Calu3 (cell line): ENCODE measurements at regions of chr5 and their contacts with region 1.

Region 1: DNA sequence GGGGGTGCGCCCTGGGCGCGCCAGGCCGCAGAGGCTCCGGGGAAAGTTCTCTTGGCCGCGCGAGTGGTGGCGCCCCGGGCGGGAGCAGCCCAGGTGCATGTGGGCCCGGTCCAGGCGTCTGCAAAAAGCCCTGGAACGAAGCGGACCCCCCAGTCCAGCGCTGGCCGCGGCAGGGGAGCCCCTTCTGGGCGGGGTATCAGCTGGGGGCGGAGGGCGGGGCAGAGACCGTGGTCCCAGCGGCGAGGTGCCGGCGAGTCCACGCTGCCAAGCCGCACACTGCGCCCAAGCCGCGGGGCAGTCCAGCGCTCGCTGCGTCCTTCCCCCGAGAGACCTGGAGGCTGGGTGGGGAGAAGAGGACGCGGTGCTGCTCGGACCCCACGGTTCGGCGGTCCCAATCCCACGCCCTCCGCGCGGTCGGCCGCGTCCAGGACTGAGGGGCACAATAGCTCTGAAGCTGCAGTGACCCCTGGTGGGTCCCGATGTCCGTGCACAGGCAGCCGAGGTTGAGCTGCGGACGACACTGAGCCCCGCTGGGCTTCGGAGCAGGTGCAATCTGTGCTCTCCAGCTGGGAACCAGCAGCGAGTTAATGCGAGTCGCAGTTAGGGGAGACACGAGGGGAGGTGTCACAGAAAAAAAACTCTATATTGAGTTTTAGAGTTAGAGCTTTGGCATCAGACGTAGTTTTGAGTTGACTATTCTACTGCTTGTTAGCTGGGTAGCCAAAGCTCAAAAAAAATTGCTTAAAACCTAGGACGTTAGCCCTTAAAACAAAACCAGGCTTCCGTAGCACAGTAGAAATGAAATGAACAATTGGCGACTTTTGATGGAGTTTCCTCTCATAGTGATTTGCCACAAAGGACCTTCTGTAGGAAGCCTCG is 1.1 kb upstream of the EPB41L4A start:
- DNase-seq: peak; percentile 94
- H3K4me3 Mint-ChIP-seq: peak overlapping the region; percentile 93
- H3K27ac Mint-ChIP-seq: peak overlapping the region; percentile 40
- H3K4me1 Mint-ChIP-seq: no peaks in the 10 kb centered on the region
- H3K27me3 Mint-ChIP-seq: no peaks in the 10 kb centered on the region
- CTCF ChIP-seq: peak; percentile 96

Region 2: DNA sequence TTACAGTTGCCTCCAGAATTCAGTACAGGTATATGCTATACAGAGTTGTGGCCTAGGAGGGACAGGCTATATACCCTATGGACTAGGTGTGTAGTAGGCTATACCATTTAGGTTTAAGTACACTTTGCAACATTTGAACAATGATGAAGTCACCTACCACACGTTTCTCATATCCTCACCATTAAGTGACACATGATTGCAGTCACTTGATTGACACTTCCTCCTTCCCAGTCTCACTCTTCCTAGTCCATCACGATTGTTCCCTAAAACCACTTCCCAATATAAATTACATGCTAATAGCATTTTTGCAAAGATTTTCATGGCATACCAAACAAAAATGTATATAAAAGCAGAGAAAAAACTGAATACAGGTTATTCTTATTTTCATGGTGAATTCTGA is 313.3 kb before region 1 on chr5:
- CTCF ChIA-PET with region 1: no interaction called
- intact Hi-C with region 1: no loop called
- DNase-seq: no peak
- H3K4me3 Mint-ChIP-seq: no peak overlapping the region
- H3K27ac Mint-ChIP-seq: no peak overlapping the region
- H3K4me1 Mint-ChIP-seq: peaks cover 10% of the 10 kb centered on the region
- H3K27me3 Mint-ChIP-seq: no peaks in the 10 kb centered on the region
- CTCF ChIP-seq: no peak

Region 3: DNA sequence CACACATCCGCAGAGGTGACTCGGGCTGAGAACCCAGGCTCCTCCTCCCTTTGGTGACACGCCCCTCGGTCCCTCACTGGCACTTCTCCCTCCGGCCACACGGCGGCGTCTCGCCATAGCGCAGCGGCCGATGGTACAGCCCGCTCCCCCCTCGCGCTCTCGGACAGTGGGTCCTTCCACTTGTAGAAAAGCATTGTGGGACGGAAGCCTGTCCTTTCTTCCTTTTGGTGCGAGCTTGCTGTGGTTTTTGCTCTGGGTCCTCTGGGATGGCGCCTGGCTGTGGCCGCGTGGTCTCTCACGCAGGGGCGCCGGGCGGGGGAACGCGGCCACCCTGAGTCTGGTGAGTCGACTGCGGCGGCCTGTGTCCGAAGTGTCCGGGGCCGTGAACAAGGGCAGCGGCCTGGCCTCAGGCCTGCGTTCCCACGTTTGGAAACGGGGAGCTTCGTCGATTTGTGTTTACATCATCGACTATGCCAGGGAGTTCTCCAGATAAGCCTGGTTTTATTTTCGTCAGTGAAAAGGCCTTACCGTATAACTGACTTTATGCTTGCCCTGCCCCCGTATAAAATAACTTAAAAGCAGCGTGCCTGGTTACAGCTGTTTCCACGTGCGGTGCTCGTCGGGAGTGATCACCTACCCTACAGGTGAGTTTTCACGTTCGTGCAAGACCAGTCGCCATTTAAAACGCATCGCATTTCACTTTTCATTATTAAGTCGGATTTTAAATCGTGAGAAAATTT is 259.4 kb before region 1 on chr5:
- CTCF ChIA-PET with region 1: interaction called, 11 read pairs
- intact Hi-C with region 1: no loop called
- DNase-seq: peak; percentile 97
- H3K4me3 Mint-ChIP-seq: peak overlapping the region; percentile 91
- H3K27ac Mint-ChIP-seq: peak overlapping the region; percentile 67
- H3K4me1 Mint-ChIP-seq: peaks cover 38% of the 10 kb centered on the region
- H3K27me3 Mint-ChIP-seq: no peaks in the 10 kb centered on the region
- CTCF ChIP-seq: peak; percentile 93

Region 4: DNA sequence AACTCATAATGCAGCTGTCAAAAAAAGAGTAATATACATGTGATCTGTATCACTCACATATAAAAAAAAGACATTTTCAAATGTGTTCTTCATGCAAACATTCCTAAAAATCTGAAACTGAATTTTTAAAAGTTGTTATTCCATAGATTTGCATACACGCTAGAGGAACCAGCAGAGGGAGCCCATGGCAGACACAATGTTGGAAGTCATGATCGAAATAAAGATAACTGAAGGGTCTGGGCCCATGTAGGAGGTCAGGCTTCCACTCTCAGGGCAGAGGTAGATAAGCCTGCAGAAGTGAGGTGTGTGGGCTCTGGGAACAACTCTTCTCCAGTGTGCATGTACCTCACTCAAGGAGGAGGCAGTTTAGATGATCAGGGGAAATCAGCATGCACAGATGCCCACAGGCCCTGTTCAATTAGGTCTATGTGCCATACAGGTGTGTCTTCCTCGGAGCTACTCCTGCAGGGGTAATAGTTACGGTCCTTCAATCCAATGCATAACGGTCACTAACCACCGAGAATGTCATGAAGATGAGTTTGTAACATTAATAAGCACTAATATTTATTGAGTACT is 209.7 kb before region 1 on chr5:
- CTCF ChIA-PET with region 1: interaction called, 22 read pairs
- intact Hi-C with region 1: loop called (anchors 1 kb)
- DNase-seq: peak; percentile 66
- H3K4me3 Mint-ChIP-seq: no peak overlapping the region
- H3K27ac Mint-ChIP-seq: no peak overlapping the region
- H3K4me1 Mint-ChIP-seq: peaks cover 17% of the 10 kb centered on the region
- H3K27me3 Mint-ChIP-seq: no peaks in the 10 kb centered on the region
- CTCF ChIP-seq: peak; percentile 55

Region 5: DNA sequence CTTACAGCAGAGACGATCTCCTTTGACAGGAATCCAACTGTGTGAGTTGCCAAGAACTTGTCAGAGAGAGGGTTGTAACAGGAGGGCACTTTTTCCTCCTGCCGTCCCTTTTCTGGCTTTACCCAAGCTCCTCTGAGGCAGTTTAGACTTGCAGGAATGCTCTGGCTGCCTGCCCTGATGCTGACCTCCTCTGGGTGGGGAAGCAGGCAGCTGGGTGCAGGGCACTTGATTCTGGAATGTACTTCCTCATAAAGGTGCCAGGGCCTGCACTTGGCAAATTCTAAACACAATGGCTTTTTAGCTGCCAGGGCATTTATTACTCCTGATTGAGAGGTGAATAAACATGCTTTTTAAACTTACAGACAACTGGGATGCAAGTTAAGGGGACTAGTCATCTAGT is 191.6 kb before region 1 on chr5:
- CTCF ChIA-PET with region 1: interaction called, 24 read pairs
- intact Hi-C with region 1: loop called (anchors 5 kb)
- DNase-seq: peak; percentile 96
- H3K4me3 Mint-ChIP-seq: peak overlapping the region; percentile 67
- H3K27ac Mint-ChIP-seq: no peak overlapping the region
- H3K4me1 Mint-ChIP-seq: peaks cover 28% of the 10 kb centered on the region
- H3K27me3 Mint-ChIP-seq: no peaks in the 10 kb centered on the region
- CTCF ChIP-seq: no peak

Region 6: DNA sequence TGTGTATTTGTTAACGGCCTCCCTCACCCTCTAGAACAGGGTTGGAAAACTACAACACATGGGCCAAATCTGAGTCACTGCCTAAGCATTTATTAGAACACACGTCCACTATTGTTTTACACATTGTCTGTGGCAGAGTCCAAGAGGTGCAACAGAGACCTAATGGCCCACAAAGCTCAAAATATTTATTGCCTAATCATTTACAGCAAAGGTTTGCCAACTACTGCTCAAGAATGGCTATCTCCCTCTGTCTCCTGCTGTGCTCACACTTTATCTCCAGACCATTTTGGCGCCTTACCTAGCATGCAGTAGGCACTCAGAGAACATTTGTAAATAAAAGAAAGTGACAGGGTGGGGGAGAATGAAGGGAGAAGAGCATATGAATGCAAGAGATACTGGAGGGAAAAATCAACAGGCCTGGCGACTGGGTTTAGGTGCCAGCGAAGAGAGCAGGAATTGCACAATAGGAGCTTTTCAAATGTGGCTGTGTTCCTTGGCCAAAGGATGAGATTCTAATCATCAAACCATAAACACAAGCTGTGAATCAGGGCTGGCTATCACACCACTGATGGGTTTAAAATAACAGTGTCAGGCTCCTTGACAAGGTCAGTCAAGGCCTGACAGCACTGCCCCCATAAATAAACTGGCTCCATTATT is 81.4 kb before region 1 on chr5:
- CTCF ChIA-PET with region 1: interaction called, 12 read pairs
- intact Hi-C with region 1: loop called (anchors 5 kb)
- DNase-seq: peak; percentile 63
- H3K4me3 Mint-ChIP-seq: peak overlapping the region; percentile 27
- H3K27ac Mint-ChIP-seq: peak overlapping the region; percentile 81
- H3K4me1 Mint-ChIP-seq: peaks cover 72% of the 10 kb centered on the region
- H3K27me3 Mint-ChIP-seq: no peaks in the 10 kb centered on the region
- CTCF ChIP-seq: no peak

Region 7: GRCh38 chr5:112529525-112529924 is 109.3 kb after region 1 on chr5:
- CTCF ChIA-PET with region 1: interaction called, 12 read pairs
- intact Hi-C with region 1: loop called (anchors 1 kb)
- DNase-seq: no peak
- H3K4me3 Mint-ChIP-seq: no peak overlapping the region
- H3K27ac Mint-ChIP-seq: no peak overlapping the region
- H3K4me1 Mint-ChIP-seq: peaks cover 19% of the 10 kb centered on the region
- H3K27me3 Mint-ChIP-seq: no peaks in the 10 kb centered on the region
- CTCF ChIP-seq: peak; percentile 59

Region 8: GRCh38 chr5:112616812-112617547 is 196.8 kb after region 1 on chr5:
- CTCF ChIA-PET with region 1: no interaction called
- intact Hi-C with region 1: no loop called
- DNase-seq: peak; percentile 59
- H3K4me3 Mint-ChIP-seq: peak overlapping the region; percentile 66
- H3K27ac Mint-ChIP-seq: no peak overlapping the region
- H3K4me1 Mint-ChIP-seq: peaks cover 13% of the 10 kb centered on the region
- H3K27me3 Mint-ChIP-seq: no peaks in the 10 kb centered on the region
- CTCF ChIP-seq: no peak